CD4-positive, alpha-beta T cell (primary cell): ENCODE measurements at regions of chr17 and their contacts with region 1.

Region 1: GRCh38 chr17:75289115-75289831 is at the start of gene SLC25A19:
- DNase-seq: peak; percentile 91 to 99 (median 94)
- ATAC-seq: peak; percentile 87
- H3K4me3 ChIP-seq: peak within 1 kb of the TSS; percentile 64
- H3K4me3 Mint-ChIP-seq: peak within 1 kb of the TSS; percentile 99
- H3K27ac ChIP-seq: peak within 1 kb of the TSS; percentile 95 to 99
- H3K27ac Mint-ChIP-seq: peak within 1 kb of the TSS; percentile 98
- H3K4me1 ChIP-seq: peaks cover 21% of the 10 kb centered on the region
- H3K4me1 Mint-ChIP-seq: peaks cover 22% of the 10 kb centered on the region
- H3K27me3 ChIP-seq: no peaks in the 10 kb centered on the region
- H3K27me3 Mint-ChIP-seq: no peaks in the 10 kb centered on the region
- CTCF ChIP-seq: peak; percentile 45
- total RNA-seq, gene SLC25A19: 11.1 to 12.0 TPM

Region 2: DNA sequence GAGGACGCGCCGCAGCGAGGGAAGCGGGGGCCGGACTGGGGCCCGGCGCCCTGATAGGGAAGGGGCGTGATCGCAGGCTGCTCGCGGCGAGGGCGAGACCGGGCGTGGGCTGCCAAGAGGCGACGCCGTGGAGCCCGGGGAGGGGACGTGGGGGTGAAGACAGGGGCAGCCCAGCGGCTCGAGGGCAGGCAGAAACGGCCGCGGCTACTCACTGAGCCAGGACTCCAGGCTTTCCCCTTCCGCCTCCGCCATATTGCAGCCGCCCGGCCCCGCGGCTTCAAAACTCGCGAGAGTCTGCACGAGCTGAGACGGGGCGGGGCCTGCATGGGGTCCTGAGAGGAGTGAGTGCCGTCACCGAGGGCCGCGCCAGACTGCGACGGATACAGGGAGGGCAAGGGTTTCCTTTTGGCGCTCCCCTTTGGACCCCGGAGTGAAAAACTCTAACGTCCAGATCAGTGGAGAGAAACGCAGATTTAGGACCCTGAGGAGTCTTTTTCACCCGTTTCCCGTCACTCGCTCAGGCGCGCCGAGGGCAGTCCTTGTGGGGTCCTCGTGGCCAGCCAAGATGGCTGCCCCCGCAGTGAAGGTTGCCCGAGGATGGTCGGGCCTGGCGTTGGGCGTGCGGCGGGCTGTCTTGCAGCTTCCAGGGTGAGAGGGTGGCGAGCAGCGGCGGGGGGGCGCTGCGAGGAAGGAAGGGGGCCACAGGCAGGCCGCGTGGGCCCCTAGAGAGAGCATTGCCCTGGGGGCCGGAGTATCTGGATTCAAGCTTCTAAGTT is 27.7 kb before region 1 on chr17 and contains the starts of genes GGA3 and MRPS7:
- CTCF ChIA-PET with region 1: interaction called, 20 read pairs
- POLR2A ChIA-PET with region 1: interaction called, 79 read pairs
- intact Hi-C with region 1: loop called in 1 of 2 experiments (anchors 1 kb)
- DNase-seq: peak; percentile 92 to 97 (median 95)
- ATAC-seq: peak; percentile 94
- H3K4me3 ChIP-seq: peak within 1 kb of the TSS; percentile 90
- H3K4me3 Mint-ChIP-seq: peak within 1 kb of the TSS; percentile 100
- H3K27ac ChIP-seq: peak within 1 kb of the TSS; percentile 94 to 96
- H3K27ac Mint-ChIP-seq: peak within 1 kb of the TSS; percentile 100
- H3K4me1 ChIP-seq: peaks cover 35% of the 10 kb centered on the region
- H3K4me1 Mint-ChIP-seq: peaks cover 58% of the 10 kb centered on the region
- H3K27me3 ChIP-seq: no peaks in the 10 kb centered on the region
- H3K27me3 Mint-ChIP-seq: no peaks in the 10 kb centered on the region
- CTCF ChIP-seq: no peak
- total RNA-seq, gene GGA3: 88.8 to 96.5 TPM
- total RNA-seq, gene MRPS7: 33.2 to 35.2 TPM

Region 3: DNA sequence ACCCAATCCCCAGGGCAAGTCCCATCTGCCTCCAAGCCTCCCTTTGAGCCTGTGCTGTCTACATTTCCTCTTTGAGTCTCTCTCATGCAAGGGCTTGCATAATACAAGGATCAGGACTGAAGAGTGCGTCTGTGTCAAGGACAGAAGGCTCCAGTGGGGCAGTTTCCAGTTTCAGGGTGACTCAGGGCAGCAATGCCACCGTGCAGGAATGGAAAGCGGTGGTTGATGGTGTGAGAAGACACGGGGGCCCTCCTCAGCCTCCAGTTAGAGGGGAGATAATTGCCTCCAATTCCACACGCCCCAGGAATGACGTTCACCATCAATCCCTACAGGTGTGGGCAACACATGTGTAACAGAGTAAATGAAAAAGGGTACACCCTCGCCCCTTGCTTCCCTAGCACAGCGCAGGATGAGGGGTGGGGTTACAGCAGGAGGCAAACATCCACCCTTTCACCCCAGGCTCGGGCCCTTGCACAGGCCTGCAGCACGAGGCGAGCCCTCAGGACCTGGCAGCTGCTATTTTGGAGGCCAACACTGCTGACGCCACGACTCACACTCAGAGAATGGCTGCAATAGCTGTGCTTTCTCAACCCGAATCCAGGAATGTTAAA is 24.8 kb after region 1 on chr17:
- CTCF ChIA-PET with region 1: no interaction called
- POLR2A ChIA-PET with region 1: interaction called, 10 read pairs
- intact Hi-C with region 1: no loop called
- DNase-seq: peak in 2 of 14 experiments; percentile 65 to 70
- ATAC-seq: no peak
- H3K4me3 ChIP-seq: no peak overlapping the region
- H3K4me3 Mint-ChIP-seq: no peak overlapping the region
- H3K27ac ChIP-seq: no peak overlapping the region
- H3K27ac Mint-ChIP-seq: peak overlapping the region; percentile 76
- H3K4me1 ChIP-seq: peaks cover 14% of the 10 kb centered on the region
- H3K4me1 Mint-ChIP-seq: peaks cover 4% of the 10 kb centered on the region
- H3K27me3 ChIP-seq: no peaks in the 10 kb centered on the region
- H3K27me3 Mint-ChIP-seq: no peaks in the 10 kb centered on the region
- CTCF ChIP-seq: no peak

Region 4: GRCh38 chr17:75338335-75338734 is 49.1 kb after region 1 on chr17:
- CTCF ChIA-PET with region 1: no interaction called
- POLR2A ChIA-PET with region 1: interaction called, 11 read pairs
- intact Hi-C with region 1: no loop called
- DNase-seq: peak in 3 of 14 experiments; percentile 44 to 56 (median 49)
- ATAC-seq: peak; percentile 54
- H3K4me3 ChIP-seq: peak overlapping the region; percentile 30
- H3K4me3 Mint-ChIP-seq: peak overlapping the region; percentile 59
- H3K27ac ChIP-seq: peak overlapping the region; percentile 38 to 47
- H3K27ac Mint-ChIP-seq: peak overlapping the region; percentile 81
- H3K4me1 ChIP-seq: peaks cover 79% of the 10 kb centered on the region
- H3K4me1 Mint-ChIP-seq: peaks cover 74% of the 10 kb centered on the region
- H3K27me3 ChIP-seq: no peaks in the 10 kb centered on the region
- H3K27me3 Mint-ChIP-seq: no peaks in the 10 kb centered on the region
- CTCF ChIP-seq: no peak

Region 5: DNA sequence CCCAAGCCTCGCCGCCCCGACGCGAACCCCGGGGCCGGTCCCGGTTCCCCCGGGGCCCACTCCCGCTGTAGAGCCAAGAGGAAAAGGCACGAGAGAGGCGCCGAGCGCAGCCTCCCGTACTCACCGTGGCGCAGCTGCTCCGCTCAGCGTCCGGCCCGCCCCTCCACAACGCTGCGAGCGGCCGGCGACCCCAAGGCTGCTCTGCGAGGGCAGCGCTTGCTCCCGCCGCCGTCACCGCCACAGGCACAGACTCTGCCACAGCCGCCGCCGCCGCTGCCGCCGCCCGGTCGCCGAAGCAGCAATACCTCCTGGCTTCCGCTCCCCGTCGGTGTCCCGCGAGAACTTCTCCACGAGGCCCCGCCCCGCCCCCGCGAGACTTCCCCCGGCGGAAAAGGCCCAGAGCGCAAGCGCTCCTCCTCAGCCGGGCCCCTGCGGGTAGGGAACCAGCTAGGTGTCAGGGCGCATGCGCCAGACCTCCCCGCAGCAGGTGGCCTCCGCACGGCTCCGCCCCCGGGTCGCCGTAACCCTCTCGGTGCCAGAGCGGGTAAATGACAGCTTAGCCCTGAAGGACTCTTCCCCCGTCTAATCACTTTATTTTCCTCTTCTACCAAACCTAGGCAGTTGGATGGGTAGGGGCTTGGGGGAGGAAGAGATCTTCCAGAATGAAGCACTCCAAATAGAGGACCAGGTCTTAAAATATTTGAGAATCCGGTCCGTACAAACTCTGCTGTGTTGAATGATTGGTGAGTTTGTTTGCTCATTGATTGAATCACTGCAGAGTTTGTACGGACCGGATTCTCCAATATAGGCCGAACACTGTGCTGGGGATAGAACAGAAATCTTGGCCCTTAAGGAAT is 116.3 kb after region 1 on chr17 and contains the start of gene GRB2:
- CTCF ChIA-PET with region 1: interaction called, 6 read pairs
- POLR2A ChIA-PET with region 1: interaction called, 51 read pairs
- intact Hi-C with region 1: loop called (anchors 1 kb)
- DNase-seq: peak; percentile 99 to 100 (median 99)
- ATAC-seq: peak; percentile 79
- H3K4me3 ChIP-seq: peak within 1 kb of the TSS; percentile 100
- H3K4me3 Mint-ChIP-seq: peak within 1 kb of the TSS; percentile 99
- H3K27ac ChIP-seq: peak within 1 kb of the TSS; percentile 86 to 89
- H3K27ac Mint-ChIP-seq: peak within 1 kb of the TSS; percentile 87
- H3K4me1 ChIP-seq: peaks cover 33% of the 10 kb centered on the region
- H3K4me1 Mint-ChIP-seq: peaks cover 45% of the 10 kb centered on the region
- H3K27me3 ChIP-seq: no peaks in the 10 kb centered on the region
- H3K27me3 Mint-ChIP-seq: no peaks in the 10 kb centered on the region
- CTCF ChIP-seq: no peak
- total RNA-seq, gene GRB2: 88.8 to 92.6 TPM

Region 6: GRCh38 chr17:75515496-75516254 is 226.4 kb after region 1 on chr17 and contains the start of gene CASKIN2:
- CTCF ChIA-PET with region 1: interaction called, 5 read pairs
- POLR2A ChIA-PET with region 1: interaction called, 18 read pairs
- intact Hi-C with region 1: loop called in 1 of 2 experiments (anchors 2 kb)
- DNase-seq: peak; percentile 49 to 89 (median 64)
- ATAC-seq: peak; percentile 52
- H3K4me3 ChIP-seq: peak within 1 kb of the TSS; percentile 80
- H3K4me3 Mint-ChIP-seq: peak within 1 kb of the TSS; percentile 86
- H3K27ac ChIP-seq: no peak within 1 kb of the TSS
- H3K27ac Mint-ChIP-seq: peak within 1 kb of the TSS; percentile 47
- H3K4me1 ChIP-seq: peaks cover 44% of the 10 kb centered on the region
- H3K4me1 Mint-ChIP-seq: peaks cover 27% of the 10 kb centered on the region
- H3K27me3 ChIP-seq: peaks cover 9 to 10% of the 10 kb centered on the region in 2 experiments
- H3K27me3 Mint-ChIP-seq: no peaks in the 10 kb centered on the region
- CTCF ChIP-seq: peak; percentile 88
- total RNA-seq, gene CASKIN2: 0.17 to 0.25 TPM